Activated naive CD8-positive, alpha-beta T cell treated with anti-CD3 and anti-CD28 coated beads, Interleukin-2, amount 10 ng/mL, durations not matched to agents 7 days and 5 days (primary cell): ENCODE measurements at regions of chr16 and their contacts with region 1.

Region 1: DNA sequence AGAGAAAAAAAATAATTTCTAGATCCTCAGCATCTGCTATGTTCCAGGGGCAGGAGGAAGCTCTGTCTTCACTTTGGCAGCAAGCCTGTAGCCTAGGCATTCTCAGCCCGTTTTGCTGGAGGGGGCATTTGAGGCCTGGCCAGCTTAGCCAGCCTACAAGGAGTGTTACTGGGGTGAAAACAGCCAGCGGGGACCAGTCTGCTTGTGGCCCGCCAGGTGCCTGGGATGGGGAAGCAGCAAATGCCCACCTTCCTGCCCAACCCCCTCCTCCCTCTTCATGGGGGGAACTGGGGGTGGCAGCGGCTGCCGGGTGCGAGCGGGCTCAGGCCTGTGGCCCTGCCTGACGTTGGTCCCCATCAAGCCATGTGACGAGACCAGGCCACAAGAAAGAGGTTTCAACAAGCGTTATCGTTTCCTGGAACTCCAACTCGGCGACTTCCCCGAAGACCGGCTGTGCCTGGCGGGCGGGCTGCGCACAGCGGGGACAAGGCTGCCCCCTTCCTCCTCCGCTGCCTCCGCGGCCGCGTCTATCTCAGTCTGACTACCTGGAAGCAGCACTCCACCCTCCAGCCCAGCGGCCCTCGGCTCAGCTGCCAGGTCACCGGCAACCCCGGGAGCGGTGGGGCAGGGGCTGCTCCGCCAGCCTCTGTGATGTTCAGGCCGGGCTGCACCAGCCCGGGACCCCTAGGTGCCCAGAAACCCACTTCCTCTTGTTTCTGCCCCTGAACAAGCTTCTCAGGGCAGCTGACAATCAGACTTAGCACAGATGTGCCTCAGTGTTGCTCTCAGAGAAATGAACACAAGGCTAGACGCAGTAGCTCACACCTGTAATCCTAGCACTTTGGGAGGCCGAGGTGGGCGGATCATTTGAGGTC is 22.9 kb downstream of the SOCS1 start:
- DNase-seq: peak; percentile 91
- ATAC-seq: peak; percentile 81
- H3K4me3 Mint-ChIP-seq: peak overlapping the region; percentile 84
- H3K27ac Mint-ChIP-seq: peak overlapping the region; percentile 95
- H3K4me1 Mint-ChIP-seq: peaks cover 76% of the 10 kb centered on the region
- H3K27me3 Mint-ChIP-seq: no peaks in the 10 kb centered on the region

Region 2: DNA sequence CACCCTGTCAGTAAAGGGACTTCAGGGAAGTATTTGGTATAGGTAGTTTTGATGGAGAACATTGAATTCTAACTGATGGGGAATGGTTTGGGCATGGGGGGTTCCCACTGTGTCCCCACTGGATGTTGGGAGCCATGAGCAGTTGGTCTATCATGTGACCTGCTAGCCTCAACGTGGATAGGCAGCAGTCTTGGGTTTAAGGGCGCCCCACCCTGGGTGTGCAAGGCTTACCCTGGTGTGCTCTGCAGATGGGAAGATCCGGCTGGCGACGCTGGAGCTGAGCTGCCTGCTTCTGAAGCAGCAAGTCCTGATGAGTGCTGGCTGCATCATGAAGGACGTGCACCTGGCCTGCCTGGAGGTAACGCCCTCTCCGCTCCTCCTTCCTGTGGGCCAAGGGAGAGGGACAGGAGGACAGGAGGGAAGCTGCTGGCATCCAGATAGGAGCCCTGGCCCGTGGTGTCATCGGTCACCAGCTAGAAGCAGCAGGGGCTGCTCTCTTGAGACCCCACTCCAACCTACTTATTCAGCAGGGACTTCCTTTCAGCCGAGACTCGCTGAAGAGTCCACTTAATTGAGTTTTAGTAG is 191.0 kb before region 1 on chr16:
- POLR2A ChIA-PET with region 1: no interaction called
- DNase-seq: no peak
- ATAC-seq: no peak
- H3K4me3 Mint-ChIP-seq: no peak overlapping the region
- H3K27ac Mint-ChIP-seq: peak overlapping the region; percentile 62
- H3K4me1 Mint-ChIP-seq: peaks cover 23% of the 10 kb centered on the region
- H3K27me3 Mint-ChIP-seq: no peaks in the 10 kb centered on the region

Region 3: DNA sequence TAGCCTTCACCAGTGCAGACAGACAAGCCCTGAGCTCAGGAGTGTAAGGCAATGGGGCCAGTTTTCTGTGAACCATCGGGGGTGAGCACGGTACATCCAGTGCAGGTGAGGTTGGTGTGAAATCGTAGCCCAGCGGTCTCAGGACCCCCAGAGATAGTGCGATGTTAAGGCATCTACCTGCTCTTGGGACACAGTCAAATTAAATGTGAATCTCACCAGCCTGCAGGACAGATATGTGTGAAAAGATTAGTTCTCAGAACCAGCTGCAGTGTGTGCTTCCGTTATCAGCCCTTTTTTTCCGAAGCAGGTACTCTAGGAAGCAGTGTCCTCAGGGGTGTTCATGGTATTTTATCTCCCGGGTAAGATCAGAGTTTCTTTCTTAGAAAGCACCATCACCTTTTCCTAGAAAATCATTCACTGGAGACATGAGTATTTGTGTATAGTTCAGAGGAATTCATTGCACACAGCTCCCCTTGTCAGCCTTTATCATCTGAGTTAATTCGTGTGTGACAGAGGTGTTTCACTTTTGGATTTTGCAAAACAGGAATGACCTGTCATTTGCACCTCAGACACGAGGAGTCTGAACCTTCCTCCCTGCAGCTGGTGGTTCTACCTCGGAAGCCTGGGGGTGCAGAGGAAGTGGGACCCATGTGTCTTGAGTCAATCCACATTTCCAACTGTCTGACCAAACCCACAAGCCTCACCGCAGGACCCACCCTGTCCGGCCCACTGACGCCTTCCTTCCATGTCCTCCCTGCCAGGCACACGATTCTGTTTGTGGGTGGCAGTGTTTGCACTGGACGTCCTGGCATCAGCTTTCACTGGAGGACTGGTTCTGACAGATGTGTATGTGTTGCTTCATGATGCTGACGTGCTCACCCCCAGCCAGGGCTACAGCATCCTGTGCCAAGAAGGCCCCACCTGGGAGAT is 180.9 kb before region 1 on chr16:
- POLR2A ChIA-PET with region 1: interaction called, 17 read pairs
- DNase-seq: peak; percentile 86
- ATAC-seq: peak; percentile 85
- H3K4me3 Mint-ChIP-seq: peak overlapping the region; percentile 43
- H3K27ac Mint-ChIP-seq: peak overlapping the region; percentile 93
- H3K4me1 Mint-ChIP-seq: peaks cover 78% of the 10 kb centered on the region
- H3K27me3 Mint-ChIP-seq: no peaks in the 10 kb centered on the region

Region 4: DNA sequence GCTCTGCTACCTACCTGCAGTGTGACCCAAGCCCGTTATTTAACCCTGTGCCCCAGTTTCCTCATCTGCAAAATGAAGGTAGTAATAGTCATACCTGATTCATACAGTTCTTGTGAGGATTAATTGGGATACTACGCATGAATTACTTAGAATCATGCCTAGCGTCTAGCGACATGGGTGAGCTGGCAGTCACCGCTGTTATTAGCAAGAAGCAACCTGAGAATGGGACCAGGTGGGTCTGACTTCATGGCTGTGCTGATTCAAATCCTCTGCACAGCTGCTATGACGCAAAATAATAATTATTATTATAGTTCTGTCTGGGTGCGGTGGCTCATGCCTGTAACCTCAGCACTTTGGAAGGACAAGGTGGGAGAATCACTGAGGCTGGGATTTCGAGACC is 15.0 kb after region 1 on chr16:
- POLR2A ChIA-PET with region 1: interaction called, 227 read pairs
- DNase-seq: no peak
- ATAC-seq: no peak
- H3K4me3 Mint-ChIP-seq: no peak overlapping the region
- H3K27ac Mint-ChIP-seq: peak overlapping the region; percentile 43
- H3K4me1 Mint-ChIP-seq: peaks cover 52% of the 10 kb centered on the region
- H3K27me3 Mint-ChIP-seq: no peaks in the 10 kb centered on the region